Lower leg skin (tissue), 4 donors: ENCODE measurements at regions of chr17 and their contacts with region 1.

Region 1: GRCh38 chr17:7572588-7573323 is 6.7 kb upstream of the CD68 start:
- DNase-seq: peak; percentile 99 to 100
- H3K4me3 ChIP-seq: peak overlapping the region; percentile 100
- CTCF ChIP-seq: no peak
- POLR2A ChIP-seq: peak in 1 of 2 donors; percentile 95

Region 2: GRCh38 chr17:7034955-7035590 is 537.7 kb before region 1 on chr17:
- intact Hi-C with region 1: loop called (anchors 5 kb)
- DNase-seq: no peak
- H3K4me3 ChIP-seq: peak overlapping the region; percentile 47
- CTCF ChIP-seq: no peak
- POLR2A ChIP-seq: no peak

Region 3: GRCh38 chr17:7523033-7523432 is 49.7 kb before region 1 on chr17:
- intact Hi-C with region 1: no loop called
- DNase-seq: no peak
- H3K4me3 ChIP-seq: no peak overlapping the region
- CTCF ChIP-seq: no peak
- POLR2A ChIP-seq: no peak